ENCODE measurements at regions of chr10 and their contacts with region 1.

Region 1: GRCh38 chr10:102225646-102226541 is at the start of gene ELOVL3:
- DNase-seq: peak; percentile 96
- H3K4me3 Mint-ChIP-seq: peak within 1 kb of the TSS; percentile 56
- H3K27ac Mint-ChIP-seq: peak within 1 kb of the TSS; percentile 38
- H3K4me1 Mint-ChIP-seq: peaks cover 17% of the 10 kb centered on the region
- H3K27me3 Mint-ChIP-seq: peaks cover 57% of the 10 kb centered on the region
- total RNA-seq, gene ELOVL3: 0.14 TPM in 1 of 2 replicates, not detected in the other

Region 2: GRCh38 chr10:102185811-102186527 is 39.9 kb before region 1 on chr10:
- intact Hi-C with region 1: loop called (anchors 5 kb)
- DNase-seq: no peak
- H3K4me3 Mint-ChIP-seq: no peak overlapping the region
- H3K27ac Mint-ChIP-seq: peak overlapping the region; percentile 58
- H3K4me1 Mint-ChIP-seq: peaks cover 17% of the 10 kb centered on the region
- H3K27me3 Mint-ChIP-seq: peaks cover 6% of the 10 kb centered on the region

Region 3: DNA sequence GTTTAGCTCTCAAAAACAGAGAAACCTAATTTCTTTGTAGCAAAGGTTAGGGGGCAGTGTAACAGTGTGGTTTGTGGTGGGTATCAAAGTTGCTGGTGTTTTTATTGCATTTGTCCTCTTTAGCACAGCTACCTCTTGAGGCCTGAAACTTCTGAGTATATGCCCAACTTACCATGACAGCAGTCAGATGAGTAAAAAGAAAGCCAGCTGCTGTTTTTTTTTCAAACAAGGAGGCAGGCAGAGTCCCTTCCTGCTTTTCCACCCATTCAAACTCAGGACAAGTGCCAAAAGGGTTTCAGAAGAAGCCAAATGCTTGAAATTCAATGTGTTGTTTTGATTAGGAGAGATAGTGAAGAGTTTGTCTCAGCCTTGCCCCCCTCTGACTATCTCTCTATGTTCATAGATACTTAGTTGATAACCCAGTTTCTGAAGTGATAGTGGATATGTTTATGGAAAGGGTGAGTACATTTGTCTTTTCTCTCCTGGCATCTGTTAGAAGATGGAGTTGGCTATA is 42.5 kb after region 1 on chr10:
- intact Hi-C with region 1: no loop called
- DNase-seq: no peak
- H3K4me3 Mint-ChIP-seq: peak overlapping the region; percentile 5
- H3K27ac Mint-ChIP-seq: peak overlapping the region; percentile 88
- H3K4me1 Mint-ChIP-seq: peaks cover 30% of the 10 kb centered on the region
- H3K27me3 Mint-ChIP-seq: no peaks in the 10 kb centered on the region

Region 4: GRCh38 chr10:102280397-102281101 is 54.7 kb after region 1 on chr10:
- intact Hi-C with region 1: loop called (anchors 5 kb)
- DNase-seq: no peak
- H3K4me3 Mint-ChIP-seq: peak overlapping the region; percentile 68
- H3K27ac Mint-ChIP-seq: peak overlapping the region; percentile 77
- H3K4me1 Mint-ChIP-seq: peaks cover 51% of the 10 kb centered on the region
- H3K27me3 Mint-ChIP-seq: no peaks in the 10 kb centered on the region

Region 5: GRCh38 chr10:102399217-102400089 is 173.6 kb after region 1 on chr10:
- intact Hi-C with region 1: loop called (anchors 1 kb)
- DNase-seq: peak; percentile 97
- H3K4me3 Mint-ChIP-seq: peak overlapping the region; percentile 90
- H3K27ac Mint-ChIP-seq: peak overlapping the region; percentile 79
- H3K4me1 Mint-ChIP-seq: peaks cover 36% of the 10 kb centered on the region
- H3K27me3 Mint-ChIP-seq: no peaks in the 10 kb centered on the region

Region 6: DNA sequence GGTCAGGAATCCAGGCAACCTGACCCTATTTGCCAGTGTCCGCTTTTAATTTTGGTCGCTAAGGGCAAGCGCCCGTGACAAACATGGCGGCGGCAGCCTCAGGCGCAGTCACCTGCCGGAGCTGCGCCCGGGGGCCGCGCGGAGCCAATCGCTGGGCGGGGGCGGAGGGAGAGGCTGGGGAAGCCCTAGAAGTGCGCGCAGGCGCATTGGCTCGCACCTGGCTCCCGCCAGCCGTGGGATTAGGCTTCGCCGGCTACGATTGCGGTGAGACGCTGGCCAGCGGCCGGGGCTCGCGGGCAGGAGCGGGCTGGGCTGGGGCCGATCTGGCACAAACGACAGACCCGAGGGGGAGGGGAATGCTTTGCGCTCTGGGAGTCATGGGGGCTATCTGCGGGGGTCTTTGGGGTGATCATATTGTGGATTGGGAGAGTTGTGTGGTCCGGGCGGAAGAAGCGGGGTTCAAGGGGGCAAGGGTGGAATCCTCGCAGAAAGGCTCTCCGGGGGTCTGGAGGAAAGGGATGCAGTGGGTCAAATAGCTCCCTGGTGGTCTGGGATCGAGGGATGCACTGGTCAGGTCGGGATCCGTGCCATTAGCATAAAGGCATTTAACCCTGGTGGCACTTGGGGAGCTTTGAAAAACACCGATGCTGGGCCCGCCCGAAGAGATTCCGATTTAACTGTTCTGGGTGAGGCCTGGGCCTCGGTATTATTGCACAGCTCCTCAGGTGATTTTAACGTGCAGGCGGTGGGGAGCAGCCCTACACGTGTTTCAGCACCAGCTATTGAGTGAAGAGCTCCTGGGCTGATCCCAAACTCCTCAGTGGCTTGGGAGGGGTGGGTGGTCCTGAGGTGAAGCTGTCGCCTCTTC is 235.5 kb after region 1 on chr10:
- intact Hi-C with region 1: no loop called
- DNase-seq: peak; percentile 98
- H3K4me3 Mint-ChIP-seq: peak overlapping the region; percentile 88
- H3K27ac Mint-ChIP-seq: peak overlapping the region; percentile 88
- H3K4me1 Mint-ChIP-seq: peaks cover 28% of the 10 kb centered on the region
- H3K27me3 Mint-ChIP-seq: peaks cover 6% of the 10 kb centered on the region

Region 7: DNA sequence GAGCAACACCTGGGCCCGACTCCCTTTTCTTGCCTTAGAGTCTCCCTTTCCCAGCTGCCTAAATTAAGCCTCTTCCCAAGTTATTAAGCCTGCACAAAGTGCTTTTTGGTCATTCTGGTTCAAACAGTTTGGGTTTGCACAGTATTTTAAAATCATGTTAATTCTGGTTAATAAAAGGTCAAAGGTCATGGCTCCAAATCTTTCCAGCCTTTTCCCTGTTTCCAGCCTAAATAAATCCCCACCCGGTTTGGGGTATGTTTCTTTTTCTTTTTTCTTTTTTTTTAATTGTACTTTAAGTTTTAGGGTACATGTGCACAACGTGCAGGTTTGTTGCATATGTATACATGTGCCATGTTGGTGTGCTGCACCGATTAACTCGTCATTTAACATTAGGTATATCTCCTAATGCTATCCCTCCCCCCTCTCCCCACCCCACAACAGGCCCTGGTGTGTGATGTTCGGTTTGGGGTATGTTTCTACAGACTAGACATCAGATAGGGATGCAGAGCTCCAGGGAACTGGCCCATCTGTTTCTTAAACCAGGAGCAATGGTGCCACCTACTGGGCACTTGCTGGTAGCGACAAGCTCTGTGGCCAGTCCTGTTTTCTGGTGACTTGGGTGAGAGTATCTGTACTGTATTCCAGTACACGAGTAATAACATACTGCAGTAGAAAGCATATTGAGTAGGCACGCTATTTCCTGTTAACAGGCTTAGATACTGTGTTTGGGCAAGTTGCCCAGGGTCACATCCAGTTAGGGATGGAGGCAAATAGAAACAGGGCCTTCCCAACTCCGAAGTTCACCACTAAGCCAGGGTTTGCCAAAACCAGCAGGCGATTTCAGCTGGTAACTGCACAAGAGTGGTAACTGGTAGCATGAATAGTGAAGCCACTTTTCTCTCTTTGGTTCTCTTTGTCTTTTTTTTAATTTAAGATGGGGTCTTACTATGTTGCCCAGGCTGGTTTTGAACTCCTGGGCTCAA is 357.8 kb after region 1 on chr10:
- intact Hi-C with region 1: loop called (anchors 5 kb)
- DNase-seq: peak; percentile 95
- H3K4me3 Mint-ChIP-seq: no peak overlapping the region
- H3K27ac Mint-ChIP-seq: no peak overlapping the region
- H3K4me1 Mint-ChIP-seq: peaks cover 7% of the 10 kb centered on the region
- H3K27me3 Mint-ChIP-seq: no peaks in the 10 kb centered on the region